Activated CD4-positive, alpha-beta T cell treated with anti-CD3 and anti-CD28 coated beads for 36 hours (primary cell): ENCODE measurements at regions of chr12 and their contacts with region 1.

Region 1: DNA sequence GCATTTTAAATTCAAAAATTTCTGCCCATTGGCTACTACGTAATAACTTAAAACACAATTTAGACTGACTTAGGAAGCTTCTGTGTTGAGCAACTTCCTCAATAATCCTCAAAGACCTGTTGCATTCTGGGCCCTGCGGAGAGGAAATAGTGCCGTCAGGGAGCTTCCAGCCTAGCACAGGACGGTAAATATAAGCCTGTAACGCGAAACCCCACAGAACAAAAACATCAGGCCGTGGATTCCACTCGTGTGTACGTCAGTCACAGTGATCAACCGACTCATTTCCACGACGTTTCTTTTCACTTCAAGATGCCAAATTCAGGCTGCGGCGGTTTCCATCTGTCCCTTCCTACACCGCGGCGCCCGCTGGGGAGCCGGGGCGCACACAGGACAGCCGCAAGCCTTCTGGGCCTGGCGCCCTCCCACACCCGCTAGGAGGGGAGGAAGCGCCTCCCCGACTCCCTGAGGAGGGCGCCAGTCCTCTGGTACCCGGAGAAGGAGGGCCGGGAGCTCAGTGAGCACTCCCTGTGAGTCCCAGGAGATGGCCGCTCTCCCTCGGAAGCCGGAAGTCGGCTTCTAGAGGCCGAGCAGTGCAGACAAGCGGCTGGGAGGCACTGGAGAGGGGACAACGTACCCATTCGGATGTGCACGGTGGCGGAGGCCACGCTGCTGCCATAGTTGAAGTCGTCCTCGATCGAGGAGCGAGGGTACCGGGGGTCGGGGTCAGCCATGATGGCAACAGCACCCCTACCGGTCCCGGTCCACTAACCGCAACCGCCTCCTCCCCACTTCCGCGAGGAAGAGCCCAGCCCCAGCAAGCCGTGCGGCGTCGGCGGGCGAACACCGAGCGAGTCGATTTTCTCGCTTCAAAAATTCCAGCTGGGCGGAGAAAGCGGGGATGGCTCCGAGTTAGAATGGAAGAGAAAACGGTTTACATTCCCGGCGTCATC is at the start of gene TMBIM4:
- DNase-seq: peak; percentile 93
- ATAC-seq: peak; percentile 86
- H3K4me3 Mint-ChIP-seq: peak within 1 kb of the TSS; percentile 86
- H3K27ac Mint-ChIP-seq: peak within 1 kb of the TSS; percentile 99
- H3K4me1 Mint-ChIP-seq: peaks cover 41% of the 10 kb centered on the region
- H3K27me3 Mint-ChIP-seq: no peaks in the 10 kb centered on the region
- total RNA-seq, gene TMBIM4: 41.4 to 44.6 TPM

Region 2: GRCh38 chr12:66203820-66204219 is 34.3 kb after region 1 on chr12:
- CTCF ChIA-PET with region 1: interaction called, 3 read pairs
- POLR2A ChIA-PET with region 1: no interaction called
- intact Hi-C with region 1: loop called in 1 of 2 experiments (anchors 2 kb)
- DNase-seq: peak; percentile 20
- ATAC-seq: peak; percentile 53
- H3K4me3 Mint-ChIP-seq: no peak overlapping the region
- H3K27ac Mint-ChIP-seq: no peak overlapping the region
- H3K4me1 Mint-ChIP-seq: peaks cover 21% of the 10 kb centered on the region
- H3K27me3 Mint-ChIP-seq: peaks cover 6% of the 10 kb centered on the region

Region 3: GRCh38 chr12:66235626-66236281 is 66.3 kb after region 1 on chr12:
- CTCF ChIA-PET with region 1: interaction called, 10 read pairs
- POLR2A ChIA-PET with region 1: no interaction called
- intact Hi-C with region 1: loop called (anchors 1 to 2 kb)
- DNase-seq: no peak
- ATAC-seq: no peak
- H3K4me3 Mint-ChIP-seq: peak overlapping the region; percentile 42
- H3K27ac Mint-ChIP-seq: no peak overlapping the region
- H3K4me1 Mint-ChIP-seq: peaks cover 3% of the 10 kb centered on the region
- H3K27me3 Mint-ChIP-seq: peaks cover 23% of the 10 kb centered on the region

Region 4: GRCh38 chr12:66596199-66596598 is 426.7 kb after region 1 on chr12:
- CTCF ChIA-PET with region 1: no interaction called
- POLR2A ChIA-PET with region 1: no interaction called
- intact Hi-C with region 1: no loop called
- DNase-seq: no peak
- ATAC-seq: no peak
- H3K4me3 Mint-ChIP-seq: no peak overlapping the region
- H3K27ac Mint-ChIP-seq: no peak overlapping the region
- H3K4me1 Mint-ChIP-seq: no peaks in the 10 kb centered on the region
- H3K27me3 Mint-ChIP-seq: no peaks in the 10 kb centered on the region